ENCODE measurements at regions of chr22 and their contacts with region 1.

Region 1: GRCh38 chr22:17910561-17911311 is 113.6 kb downstream of the MICAL3 start:
- DNase-seq: no peak
- H3K4me3 ChIP-seq: no peak overlapping the region
- H3K27ac ChIP-seq: peak overlapping the region; percentile 69 to 88 (median 86)
- H3K4me1 ChIP-seq: peaks cover 40 to 83% (median 75%) of the 10 kb centered on the region in 4 donors
- H3K27me3 ChIP-seq: no peaks in the 10 kb centered on the region
- CTCF ChIP-seq: peak; percentile 31 to 53 (median 34)
- EP300 ChIP-seq: peak; percentile 31
- POLR2A ChIP-seq: no peak

Region 2: DNA sequence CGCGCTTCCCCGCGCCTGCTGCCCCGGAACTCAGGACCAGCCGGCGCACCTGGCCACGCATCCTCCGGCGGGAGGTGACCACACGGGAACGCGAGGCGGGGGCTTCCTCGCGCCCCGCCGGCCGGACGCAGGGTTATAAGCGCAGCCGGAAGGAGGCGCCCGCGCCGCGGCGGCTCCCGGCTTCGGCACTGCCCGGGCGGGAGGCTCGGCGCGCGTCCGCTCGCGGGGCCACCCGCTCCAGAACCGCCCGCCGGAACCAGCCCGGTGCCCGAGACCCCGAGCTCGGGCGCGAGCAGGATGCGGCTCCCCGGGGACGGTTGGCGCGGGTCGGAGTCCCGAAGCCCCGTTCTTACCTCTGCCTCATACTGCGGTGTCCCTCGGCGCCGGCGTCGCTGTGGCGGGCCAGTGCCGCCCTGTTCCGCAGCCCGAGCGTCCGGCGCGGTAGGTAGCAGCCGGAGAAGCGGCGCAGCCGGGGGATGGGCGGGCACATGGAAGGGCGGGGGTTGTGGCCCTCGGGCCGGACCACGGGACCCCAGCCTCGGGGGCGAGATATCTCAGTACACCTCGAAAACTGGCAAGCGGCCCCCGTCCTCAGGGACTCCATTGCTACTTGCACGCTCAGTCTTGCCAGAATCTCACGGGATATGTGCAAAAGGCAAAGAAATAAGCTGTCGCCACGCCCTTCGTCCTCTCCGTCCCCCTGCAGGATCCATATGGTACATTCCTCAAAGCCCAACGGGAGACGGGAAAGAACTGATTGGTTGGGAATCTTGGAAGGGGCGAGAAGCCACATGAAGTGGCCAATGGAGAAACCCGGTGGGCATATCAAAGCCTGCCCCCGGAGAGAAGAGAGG is 90.5 kb after region 1 on chr22:
- intact Hi-C with region 1: loop called (anchors 5 kb)
- DNase-seq: peak; percentile 95
- H3K4me3 ChIP-seq: peak overlapping the region; percentile 77 to 94 (median 89)
- H3K27ac ChIP-seq: peak overlapping the region; percentile 89 to 95 (median 92)
- H3K4me1 ChIP-seq: peaks cover 31 to 55% (median 50%) of the 10 kb centered on the region in 4 donors
- H3K27me3 ChIP-seq: no peaks in the 10 kb centered on the region
- CTCF ChIP-seq: peak; percentile 56 to 70 (median 59)
- EP300 ChIP-seq: no peak
- POLR2A ChIP-seq: peak; percentile 75

Region 3: GRCh38 chr22:18024276-18024947 is 113.7 kb after region 1 on chr22 and contains the start of gene MICAL3:
- intact Hi-C with region 1: loop called (anchors 5 kb)
- DNase-seq: no peak
- H3K4me3 ChIP-seq: peak within 1 kb of the TSS; percentile 67 to 78 (median 70)
- H3K27ac ChIP-seq: peak within 1 kb of the TSS; percentile 89 to 93 (median 90)
- H3K4me1 ChIP-seq: peaks cover 12 to 46% (median 33%) of the 10 kb centered on the region in 4 donors
- H3K27me3 ChIP-seq: no peaks in the 10 kb centered on the region
- CTCF ChIP-seq: peak; percentile 58 to 78 (median 74)
- EP300 ChIP-seq: no peak
- POLR2A ChIP-seq: no peak
- total RNA-seq, gene MICAL3: 35.1 to 91.8 (median 67.8) TPM

Measured in esophagus muscularis mucosa (tissue), 4 donors.